Mucosa of descending colon (tissue), 3 donors: ENCODE measurements at regions of chr9 and their contacts with region 1.

Region 1: GRCh38 chr9:137406876-137407589 is 15.9 kb downstream of the EXD3 start:
- DNase-seq: peak; percentile 79 to 88 (median 79)
- ATAC-seq: peak; percentile 93
- H3K4me3 ChIP-seq: no peak overlapping the region
- H3K4me1 ChIP-seq: peaks cover 26% of the 10 kb centered on the region
- CTCF ChIP-seq: peak; percentile 89

Region 2: DNA sequence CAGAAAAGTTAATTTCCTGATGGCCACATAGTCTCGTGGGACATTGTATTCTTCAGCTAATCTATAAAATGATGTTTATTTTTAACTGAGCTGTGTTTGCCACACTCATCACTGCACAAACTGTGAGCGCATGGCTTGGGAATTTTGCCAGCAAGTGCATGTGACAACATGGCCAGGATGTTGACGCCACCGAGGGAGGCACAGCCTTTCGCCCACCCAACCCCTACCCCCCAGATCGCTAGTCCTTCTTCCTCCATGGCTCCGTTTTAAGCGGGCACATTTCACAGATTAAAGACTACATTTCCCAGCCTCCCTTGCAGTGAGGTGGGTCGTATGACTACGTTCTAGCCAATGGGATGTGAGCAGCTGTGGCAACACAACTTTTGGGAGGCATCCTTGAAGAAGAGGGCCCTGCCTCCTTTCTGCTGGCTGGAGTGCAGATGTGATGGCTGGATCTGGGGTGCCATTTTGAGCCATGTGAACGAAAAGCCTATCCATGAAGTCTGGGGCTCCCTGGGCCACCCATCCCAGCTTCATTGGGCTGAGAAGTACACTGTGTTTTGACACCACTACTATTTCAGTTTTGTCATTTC is 112.8 kb before region 1 on chr9:
- intact Hi-C with region 1: loop called in 1 of 2 experiments (anchors 5 kb)
- DNase-seq: peak in 2 of 3 donors; percentile 71 to 85
- ATAC-seq: peak; percentile 42
- H3K4me3 ChIP-seq: no peak overlapping the region
- H3K4me1 ChIP-seq: peaks cover 16% of the 10 kb centered on the region
- CTCF ChIP-seq: no peak

Region 3: GRCh38 chr9:137482094-137482781 is 75.2 kb after region 1 on chr9:
- intact Hi-C with region 1: no loop called
- DNase-seq: peak; percentile 24 to 50 (median 35)
- ATAC-seq: peak; percentile 40
- H3K4me3 ChIP-seq: no peak overlapping the region
- H3K4me1 ChIP-seq: no peaks in the 10 kb centered on the region
- CTCF ChIP-seq: no peak